Breast epithelium (tissue), 4 donors: ENCODE measurements at regions of chr19 and their contacts with region 1.

Region 1: DNA sequence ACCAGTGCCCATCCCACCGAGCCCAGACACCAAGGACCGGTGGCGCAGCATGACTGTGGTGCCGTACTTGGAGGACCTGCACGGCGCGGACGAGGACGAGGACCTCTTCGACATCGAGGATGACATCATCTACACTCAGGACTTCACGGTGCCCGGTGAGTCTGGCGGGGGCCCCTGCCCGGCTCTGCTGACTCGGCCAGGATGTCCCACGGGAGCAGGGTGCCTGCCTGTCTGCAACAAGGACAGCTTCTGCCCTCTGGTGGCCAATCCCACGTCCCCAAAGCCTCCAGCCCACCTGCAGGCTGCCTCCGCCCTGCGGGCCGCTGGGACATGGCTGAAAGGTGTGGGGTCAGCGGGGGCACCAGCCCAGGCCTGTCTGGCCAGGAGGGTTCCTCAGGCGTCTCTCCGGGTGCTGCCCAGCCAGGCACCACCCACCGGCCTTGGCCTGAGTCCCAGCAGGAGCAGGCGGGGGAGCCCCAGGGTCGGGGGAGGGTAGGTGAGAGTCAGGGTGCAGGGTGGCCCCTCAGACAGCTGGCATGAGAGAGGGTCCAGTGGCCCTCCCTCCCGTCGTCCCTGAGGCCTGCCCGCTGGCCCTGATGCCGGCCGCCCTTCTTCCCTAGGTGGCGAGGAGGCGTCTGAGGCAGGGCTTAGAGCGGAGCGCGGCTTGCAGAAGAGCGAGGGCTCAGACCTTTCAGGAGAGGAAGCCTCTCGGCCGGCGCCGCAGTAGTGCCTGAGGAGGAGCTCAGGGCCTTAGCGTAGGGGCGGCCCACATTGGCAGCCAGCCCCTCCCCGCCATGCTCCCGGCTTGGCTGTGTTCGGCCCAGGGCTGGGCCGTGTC is 14.6 kb downstream of the CBARP start:
- DNase-seq: no peak
- H3K4me3 ChIP-seq: no peak overlapping the region
- H3K27ac ChIP-seq: peak overlapping the region in 1 of 2 donors; percentile 20
- H3K4me1 ChIP-seq: no peaks in the 10 kb centered on the region
- H3K27me3 ChIP-seq: no peaks in the 10 kb centered on the region
- CTCF ChIP-seq: no peak
- POLR2A ChIP-seq: no peak

Region 2: GRCh38 chr19:1019980-1020867 is 203.0 kb before region 1 on chr19:
- intact Hi-C with region 1: loop called (anchors 10 kb)
- DNase-seq: no peak
- H3K4me3 ChIP-seq: peak overlapping the region; percentile 92 to 97 (median 93)
- H3K27ac ChIP-seq: peak overlapping the region; percentile 96
- H3K4me1 ChIP-seq: peaks cover 16 to 46% of the 10 kb centered on the region in 2 donors
- H3K27me3 ChIP-seq: no peaks in the 10 kb centered on the region
- CTCF ChIP-seq: no peak
- POLR2A ChIP-seq: no peak

Region 3: GRCh38 chr19:1304197-1304924 is 81.1 kb after region 1 on chr19:
- intact Hi-C with region 1: no loop called
- DNase-seq: no peak
- H3K4me3 ChIP-seq: no peak overlapping the region
- H3K27ac ChIP-seq: no peak overlapping the region
- H3K4me1 ChIP-seq: no peaks in the 10 kb centered on the region
- H3K27me3 ChIP-seq: peaks cover 0 to 9% of the 10 kb centered on the region in 2 donors
- CTCF ChIP-seq: no peak
- POLR2A ChIP-seq: no peak